Heart right ventricle (tissue), 16 donors: ENCODE measurements at regions of chr3 and their contacts with region 1.

Region 1: GRCh38 chr3:177816667-177817208 is 619.5 kb upstream of the TBL1XR1 start:
- DNase-seq: peak in 1 of 2 donors; percentile 45
- ATAC-seq: peak; percentile 53 to 74 (median 67)
- H3K4me3 ChIP-seq: no peak overlapping the region
- H3K27ac ChIP-seq: peak overlapping the region in 8 of 10 donors; percentile 20 to 74 (median 55)
- H3K4me1 ChIP-seq: peaks cover 2 to 69% (median 33%) of the 10 kb centered on the region in 9 donors
- H3K27me3 ChIP-seq: no peaks in the 10 kb centered on the region
- CTCF ChIP-seq: peak in 6 of 9 donors; percentile 9 to 48 (median 32)

Region 2: GRCh38 chr3:177615015-177615414 is 201.7 kb before region 1 on chr3:
- intact Hi-C with region 1: loop called in 1 of 10 experiments (anchors 10 kb)
- DNase-seq: peak; percentile 60 to 62
- ATAC-seq: peak; percentile 63 to 96 (median 74)
- H3K4me3 ChIP-seq: no peak overlapping the region
- H3K27ac ChIP-seq: peak overlapping the region in 3 of 10 donors; percentile 7 to 56 (median 18)
- H3K4me1 ChIP-seq: peaks cover 5 to 46% (median 35%) of the 10 kb centered on the region in 9 donors
- H3K27me3 ChIP-seq: no peaks in the 10 kb centered on the region
- CTCF ChIP-seq: no peak

Region 3: DNA sequence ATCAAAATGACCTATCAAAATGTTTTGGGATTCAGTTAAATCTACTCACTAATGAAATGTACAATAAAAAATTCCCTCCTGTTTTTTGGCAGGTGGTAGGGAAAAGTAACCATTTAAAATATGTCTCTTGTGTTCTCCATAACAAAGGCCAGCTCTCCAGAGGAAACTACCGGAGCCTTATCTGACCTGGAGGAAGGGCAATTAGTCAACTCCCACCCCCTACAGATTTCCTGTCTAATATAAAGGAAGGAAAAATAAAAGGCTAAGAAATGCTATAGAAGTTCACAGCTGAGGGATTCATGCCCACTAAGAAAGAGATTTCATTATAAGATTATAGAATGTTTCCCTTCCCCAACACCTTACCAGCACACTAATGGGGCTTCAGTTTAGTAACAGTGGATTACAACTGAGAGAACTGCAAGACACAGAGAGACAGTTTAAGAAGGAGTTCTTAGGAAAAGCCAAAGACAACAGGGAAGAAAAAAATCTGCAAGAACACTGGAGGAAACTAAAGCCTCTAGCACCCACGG is 343.0 kb after region 1 on chr3:
- intact Hi-C with region 1: loop called in 2 of 10 experiments (anchors 10 kb)
- DNase-seq: no peak
- ATAC-seq: peak in 5 of 8 donors; percentile 29 to 81 (median 74)
- H3K4me3 ChIP-seq: no peak overlapping the region
- H3K27ac ChIP-seq: no peak overlapping the region
- H3K4me1 ChIP-seq: peaks cover 0 to 15% (median 6%) of the 10 kb centered on the region in 9 donors
- H3K27me3 ChIP-seq: no peaks in the 10 kb centered on the region
- CTCF ChIP-seq: no peak